Thyroid gland (tissue), 4 donors: ENCODE measurements at regions of chr1 and their contacts with region 1.

Region 1: GRCh38 chr1:60857851-60858250 is 224.5 kb upstream of the NFIA start:
- DNase-seq: no peak
- H3K4me3 ChIP-seq: no peak overlapping the region
- H3K27ac ChIP-seq: no peak overlapping the region
- H3K4me1 ChIP-seq: no peaks in the 10 kb centered on the region
- H3K27me3 ChIP-seq: no peaks in the 10 kb centered on the region
- CTCF ChIP-seq: no peak
- POLR2A ChIP-seq: no peak

Region 2: DNA sequence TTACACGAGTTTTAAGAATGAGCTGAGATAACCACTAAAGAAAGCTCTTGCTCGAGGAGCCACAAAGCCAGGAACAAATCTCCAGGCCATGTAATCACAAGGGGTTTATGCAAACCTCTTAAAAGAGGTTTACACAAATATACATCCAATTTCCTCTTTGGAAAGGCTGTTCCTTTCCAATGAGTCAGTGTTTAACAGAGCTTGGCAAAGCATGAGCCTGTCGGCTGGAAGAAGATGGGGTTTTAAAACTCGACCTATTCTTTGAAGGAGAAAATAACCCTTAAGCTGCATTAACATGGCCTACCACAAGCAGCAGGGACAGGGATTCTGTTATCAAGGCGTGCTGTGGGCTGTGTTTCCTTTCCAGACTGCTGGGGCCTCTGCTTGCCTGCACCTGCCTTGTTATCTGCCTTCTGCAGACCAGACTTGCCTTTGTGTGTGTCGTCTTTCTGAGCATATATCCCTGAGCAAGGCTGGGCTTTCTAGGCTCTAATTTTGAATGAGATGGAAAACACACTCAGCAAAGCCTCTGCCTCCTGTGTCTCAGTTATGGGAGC is 890.6 kb before region 1 on chr1:
- intact Hi-C with region 1: loop called (anchors 10 kb)
- DNase-seq: no peak
- H3K4me3 ChIP-seq: no peak overlapping the region
- H3K27ac ChIP-seq: no peak overlapping the region
- H3K4me1 ChIP-seq: peaks cover 7 to 11% of the 10 kb centered on the region in 2 donors
- H3K27me3 ChIP-seq: no peaks in the 10 kb centered on the region
- CTCF ChIP-seq: no peak
- POLR2A ChIP-seq: no peak

Region 3: DNA sequence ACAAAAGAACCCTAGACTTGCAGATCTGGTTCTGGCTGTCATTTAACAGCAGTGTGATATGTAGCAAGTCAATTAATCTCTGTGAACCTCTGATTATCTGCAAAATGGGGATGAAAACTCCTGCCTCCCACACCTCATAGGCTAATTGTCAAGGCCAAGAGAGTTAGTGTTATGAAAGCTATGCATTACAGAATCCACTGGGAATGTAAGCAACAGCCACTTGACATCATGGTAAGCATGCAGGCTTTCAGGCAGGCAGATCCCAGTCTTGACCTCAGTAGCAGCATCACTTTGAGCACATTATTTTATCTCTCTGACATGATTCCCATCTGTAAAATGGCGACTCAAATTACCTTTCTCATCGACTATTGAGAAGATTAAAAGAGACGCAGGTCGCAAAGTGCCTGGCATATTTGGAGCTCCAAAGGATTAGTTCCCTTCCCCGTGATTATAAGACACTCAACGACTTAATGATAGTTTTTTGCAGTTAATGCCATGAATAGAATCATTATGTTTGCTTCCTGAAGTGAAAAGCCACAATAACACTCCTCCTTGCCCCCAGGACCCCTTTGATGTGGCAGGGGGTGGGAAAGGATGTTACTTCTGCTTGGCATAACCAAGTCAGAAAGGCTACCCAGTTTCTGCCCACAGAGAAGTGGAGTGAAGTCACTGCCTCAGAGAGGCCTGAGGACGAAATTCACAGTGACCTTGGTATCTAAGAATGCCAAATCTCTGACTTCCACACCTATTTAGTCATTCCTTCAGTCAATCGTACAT is 48.5 kb before region 1 on chr1:
- intact Hi-C with region 1: no loop called
- DNase-seq: no peak
- H3K4me3 ChIP-seq: no peak overlapping the region
- H3K27ac ChIP-seq: no peak overlapping the region
- H3K4me1 ChIP-seq: no peaks in the 10 kb centered on the region
- H3K27me3 ChIP-seq: no peaks in the 10 kb centered on the region
- CTCF ChIP-seq: no peak
- POLR2A ChIP-seq: no peak

Region 4: DNA sequence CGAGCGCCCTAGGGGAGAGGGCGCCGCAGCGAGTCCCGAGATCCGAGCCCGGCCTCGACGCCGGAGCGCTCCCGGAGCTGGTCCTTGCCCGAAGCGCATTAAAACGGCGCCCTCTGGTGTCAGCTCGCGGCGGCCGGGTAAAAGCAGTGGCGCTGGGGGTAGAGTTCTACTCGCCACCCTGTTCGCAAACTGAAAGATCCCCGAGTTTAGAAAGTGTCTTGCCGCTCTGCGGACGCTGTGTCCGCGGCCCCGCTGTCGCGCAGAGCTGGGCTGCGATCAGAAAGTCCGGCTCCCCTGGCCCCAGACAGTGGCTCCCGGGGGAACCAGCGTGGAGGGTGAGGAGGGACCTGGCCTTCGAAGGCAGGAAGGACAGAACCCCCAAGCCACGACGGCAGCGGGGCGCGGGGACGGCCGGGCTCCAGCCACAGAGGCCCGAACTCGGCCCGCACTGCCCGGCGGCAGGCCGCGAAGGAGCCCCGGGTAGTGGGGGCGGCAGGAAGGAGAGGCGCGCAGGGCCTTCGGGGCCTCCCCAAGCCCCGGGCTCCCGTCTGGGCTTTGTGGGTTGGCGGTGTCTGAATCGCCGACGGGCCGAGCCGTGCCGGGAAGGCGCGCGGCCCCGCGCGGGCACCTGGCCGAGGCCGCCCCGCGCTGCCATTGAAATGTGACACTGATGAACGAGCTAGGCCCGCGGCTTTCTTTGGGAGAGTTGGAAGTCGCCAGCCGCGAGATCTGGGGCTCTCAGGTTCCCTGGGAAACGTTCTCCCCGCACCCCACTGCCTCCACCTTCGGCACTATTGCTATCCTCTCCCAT is 185.4 kb after region 1 on chr1:
- intact Hi-C with region 1: loop called (anchors 5 kb)
- DNase-seq: peak; percentile 89 to 94
- H3K4me3 ChIP-seq: peak overlapping the region in 2 of 3 donors; percentile 11 to 64
- H3K27ac ChIP-seq: peak overlapping the region; percentile 25 to 91 (median 83)
- H3K4me1 ChIP-seq: peaks cover 3 to 8% of the 10 kb centered on the region in 2 donors
- H3K27me3 ChIP-seq: no peaks in the 10 kb centered on the region
- CTCF ChIP-seq: peak; percentile 77 to 92 (median 89)
- POLR2A ChIP-seq: peak in 1 of 2 donors; percentile 48

Region 5: DNA sequence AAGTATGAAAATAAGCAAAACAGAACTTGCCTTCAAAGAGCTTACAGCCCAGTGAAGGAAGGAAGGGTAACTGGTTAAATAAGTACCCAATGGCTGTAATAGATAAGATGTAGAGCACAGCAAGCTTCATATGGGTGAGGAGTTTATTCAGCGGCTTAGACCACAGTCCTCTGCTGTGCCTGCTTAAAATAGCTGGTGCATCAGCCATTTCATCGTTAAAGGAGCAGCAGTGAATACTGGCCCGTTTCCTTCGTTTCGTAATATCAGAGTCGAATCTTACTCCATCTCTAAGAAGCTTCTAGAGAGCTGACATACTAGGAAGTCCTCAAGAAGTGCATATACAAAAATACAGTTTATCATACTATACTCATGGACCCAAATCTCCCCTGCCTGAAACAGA is 511.0 kb after region 1 on chr1:
- intact Hi-C with region 1: no loop called
- DNase-seq: no peak
- H3K4me3 ChIP-seq: no peak overlapping the region
- H3K27ac ChIP-seq: no peak overlapping the region
- H3K4me1 ChIP-seq: no peaks in the 10 kb centered on the region
- H3K27me3 ChIP-seq: no peaks in the 10 kb centered on the region
- CTCF ChIP-seq: no peak
- POLR2A ChIP-seq: no peak